Gastrocnemius medialis (tissue), 4 donors: ENCODE measurements at regions of chr9 and their contacts with region 1.

Region 1: DNA sequence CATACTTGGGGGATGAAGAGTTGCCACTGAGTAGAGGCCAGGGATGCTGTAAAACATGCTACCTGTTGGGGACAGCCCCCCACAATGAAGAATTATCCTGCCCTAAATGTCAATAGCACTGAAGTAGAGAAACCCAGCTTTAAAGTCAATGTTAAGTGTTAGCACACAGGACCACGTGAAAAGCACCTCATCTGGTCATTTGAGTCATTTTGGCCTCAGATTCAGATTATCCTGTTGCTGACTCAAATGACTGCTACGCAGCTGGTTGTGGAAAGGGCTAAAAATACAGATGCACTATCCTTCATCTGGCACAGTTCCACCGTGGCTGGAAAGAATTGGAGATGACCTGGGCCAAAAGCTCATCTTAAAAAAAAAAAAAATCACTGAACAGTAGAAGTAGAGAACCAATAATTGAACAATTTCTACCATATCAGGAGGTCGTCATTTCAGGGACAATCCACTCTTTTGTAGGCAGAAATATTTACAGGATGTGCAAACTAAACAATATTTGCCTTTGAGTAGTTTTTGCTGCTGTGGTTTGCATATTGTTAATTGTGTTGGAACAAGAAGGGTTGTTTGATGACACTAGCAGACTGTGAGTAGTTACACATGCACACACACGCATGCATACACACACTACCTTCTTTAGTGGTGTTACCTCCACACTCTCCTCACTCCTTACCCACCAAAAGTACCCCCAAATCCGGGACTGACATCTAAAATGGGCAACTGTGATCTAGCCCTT is 195.3 kb upstream of the KLF9 start:
- DNase-seq: peak; percentile 76 to 78
- ATAC-seq: peak; percentile 95 to 98
- H3K4me3 ChIP-seq: no peak overlapping the region
- H3K27ac ChIP-seq: peak overlapping the region; percentile 77 to 88 (median 80)
- H3K4me1 ChIP-seq: peaks cover 43 to 51% of the 10 kb centered on the region in 2 donors
- H3K27me3 ChIP-seq: no peaks in the 10 kb centered on the region
- CTCF ChIP-seq: no peak
- POLR2A ChIP-seq: peak in 1 of 2 donors; percentile 39

Region 2: GRCh38 chr9:69385581-69386033 is 1224.1 kb before region 1 on chr9:
- in situ Hi-C with region 1: loop called in 1 of 4 experiments (anchors 25 kb)
- intact Hi-C with region 1: loop called (anchors 10 kb)
- DNase-seq: no peak
- ATAC-seq: no peak
- H3K4me3 ChIP-seq: no peak overlapping the region
- H3K27ac ChIP-seq: peak overlapping the region; percentile 63 to 98 (median 96)
- H3K4me1 ChIP-seq: peaks cover 37 to 38% of the 10 kb centered on the region in 2 donors
- H3K27me3 ChIP-seq: no peaks in the 10 kb centered on the region
- CTCF ChIP-seq: no peak
- POLR2A ChIP-seq: no peak

Region 3: GRCh38 chr9:70297141-70297540 is 312.6 kb before region 1 on chr9:
- in situ Hi-C with region 1: no loop called
- intact Hi-C with region 1: no loop called
- DNase-seq: no peak
- ATAC-seq: no peak
- H3K4me3 ChIP-seq: no peak overlapping the region
- H3K27ac ChIP-seq: no peak overlapping the region
- H3K4me1 ChIP-seq: peaks cover 0 to 12% of the 10 kb centered on the region in 2 donors
- H3K27me3 ChIP-seq: no peaks in the 10 kb centered on the region
- CTCF ChIP-seq: no peak
- POLR2A ChIP-seq: no peak

Region 4: GRCh38 chr9:70367305-70367930 is 242.3 kb before region 1 on chr9:
- in situ Hi-C with region 1: no loop called
- intact Hi-C with region 1: no loop called
- DNase-seq: no peak
- ATAC-seq: peak; percentile 26 to 34
- H3K4me3 ChIP-seq: no peak overlapping the region
- H3K27ac ChIP-seq: peak overlapping the region in 1 of 4 donors; percentile 12
- H3K4me1 ChIP-seq: peaks cover 3 to 5% of the 10 kb centered on the region in 2 donors
- H3K27me3 ChIP-seq: no peaks in the 10 kb centered on the region
- CTCF ChIP-seq: no peak
- POLR2A ChIP-seq: no peak